GM18951 (cell line): ENCODE measurements at regions of chr5 and their contacts with region 1.

Region 1: GRCh38 chr5:161544350-161544765 is 2.2 kb downstream of the GABRB2 start:
- POLR2A ChIP-seq: no peak

Region 2: GRCh38 chr5:160508780-160509361 is 1035.5 kb before region 1 on chr5:
- in situ Hi-C with region 1: loop called (anchors 25 kb)
- POLR2A ChIP-seq: no peak